GM10248 (cell line): ENCODE measurements at regions of chr3 and their contacts with region 1.

Region 1: DNA sequence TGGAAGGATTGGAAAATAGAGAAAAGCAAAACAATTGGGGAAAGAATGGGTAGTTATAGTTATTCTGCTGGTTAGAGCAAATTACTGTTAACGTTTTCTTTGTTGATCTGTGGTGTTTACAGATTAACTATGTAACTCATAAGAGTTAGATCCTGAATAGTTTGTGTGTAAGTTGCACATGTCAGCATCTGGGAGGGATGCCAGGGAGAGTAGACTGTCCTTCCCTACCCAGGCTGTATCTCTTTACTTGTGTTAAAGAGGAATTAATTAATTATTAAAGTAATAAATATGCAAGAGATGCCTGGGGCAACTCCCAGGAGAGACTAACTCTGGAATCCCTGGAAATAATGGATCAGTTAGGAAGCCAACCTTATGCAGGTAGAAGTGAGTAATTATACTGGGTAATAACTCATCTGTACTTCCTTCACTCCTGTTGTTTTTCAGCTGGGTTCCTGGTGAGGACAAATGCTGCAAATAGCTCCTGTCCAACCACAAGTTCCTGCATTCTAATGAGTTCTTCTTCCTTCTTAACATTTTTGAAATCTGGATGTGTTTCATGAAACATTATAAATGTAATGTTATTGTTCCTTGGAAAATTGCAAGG is 18.9 kb downstream of the GHRL start:
- DNase-seq: no peak
- CTCF ChIP-seq: no peak

Region 2: GRCh38 chr3:9843715-9844438 is 429.9 kb before region 1 on chr3 and contains the start of gene RPUSD3:
- CTCF ChIA-PET with region 1: no interaction called
- POLR2A ChIA-PET with region 1: no interaction called
- DNase-seq: peak; percentile 100
- CTCF ChIP-seq: no peak

Region 3: DNA sequence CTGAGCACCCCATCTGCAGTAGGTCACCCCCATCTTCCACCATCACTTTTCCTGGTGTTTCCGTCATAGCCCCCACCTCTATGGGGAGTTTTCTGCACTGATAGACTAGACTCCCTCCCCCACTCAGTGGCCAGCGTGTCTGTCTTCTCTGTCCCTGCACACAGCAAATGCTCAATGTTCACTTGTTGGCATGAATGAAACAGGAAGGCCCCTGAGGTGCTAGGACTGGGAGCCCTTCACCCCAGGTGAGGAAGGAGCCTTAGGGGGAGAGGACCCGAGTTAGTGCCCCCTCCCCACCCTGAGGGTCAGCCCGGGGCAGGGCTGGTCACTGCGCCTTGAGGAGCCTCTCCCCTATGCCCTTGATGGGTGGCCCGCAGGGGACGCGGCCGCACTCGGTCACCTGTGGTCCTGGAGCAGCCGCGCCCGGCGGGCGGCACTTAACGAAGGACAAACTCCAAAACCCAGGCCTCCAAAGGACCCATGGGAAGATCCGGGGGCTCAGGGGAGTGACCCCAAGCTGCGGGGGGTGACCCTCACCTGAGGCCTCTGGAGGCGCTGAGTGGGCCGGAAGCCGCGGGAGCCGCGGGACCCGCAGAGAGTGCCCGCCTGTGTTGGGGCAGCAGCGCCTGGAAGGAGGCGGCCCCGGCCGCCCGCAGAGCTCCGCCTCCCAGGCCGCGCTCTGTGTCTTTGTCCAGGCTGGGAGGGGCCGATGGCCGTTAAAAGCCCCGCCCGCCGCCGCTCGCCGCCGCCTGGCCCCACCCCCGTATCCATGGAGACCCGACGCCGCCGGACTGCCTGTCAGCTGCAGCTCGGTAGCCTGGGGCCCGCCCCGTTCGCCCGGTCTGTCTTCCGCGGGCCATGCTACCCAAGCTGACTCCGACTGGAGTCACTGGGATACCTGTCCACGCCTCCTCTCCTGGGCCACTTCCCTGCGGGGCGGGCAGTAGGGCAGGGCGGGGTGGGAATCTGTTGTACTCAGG is 263.0 kb before region 1 on chr3:
- CTCF ChIA-PET with region 1: no interaction called
- POLR2A ChIA-PET with region 1: no interaction called
- DNase-seq: peak; percentile 98
- CTCF ChIP-seq: no peak

Region 4: DNA sequence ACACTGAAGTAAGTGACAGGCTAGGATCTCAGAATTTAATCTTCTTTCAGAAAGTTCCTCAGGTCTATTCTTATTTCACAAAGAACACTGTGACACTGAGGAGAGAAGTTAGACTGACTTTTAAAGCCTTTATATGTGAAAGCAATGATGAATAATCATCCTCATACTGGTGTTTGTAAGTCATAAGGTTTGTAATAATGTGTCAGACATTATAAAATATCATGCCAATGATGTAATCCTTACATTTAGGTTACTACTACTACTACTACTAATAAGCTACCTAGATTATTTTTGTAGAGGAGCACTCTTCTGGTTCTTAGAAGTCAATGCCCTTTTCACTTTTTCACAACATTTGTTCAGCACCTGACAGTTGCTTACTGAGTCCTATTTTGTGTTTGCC is 199.1 kb before region 1 on chr3:
- CTCF ChIA-PET with region 1: no interaction called
- POLR2A ChIA-PET with region 1: no interaction called
- DNase-seq: no peak
- CTCF ChIP-seq: no peak

Region 5: GRCh38 chr3:10286596-10287330 is 13.0 kb after region 1 on chr3:
- CTCF ChIA-PET with region 1: interaction called, 16 read pairs
- POLR2A ChIA-PET with region 1: no interaction called
- DNase-seq: peak; percentile 50
- CTCF ChIP-seq: peak; percentile 28